ENCODE measurements at regions of chr12 and their contacts with region 1.

Region 1: DNA sequence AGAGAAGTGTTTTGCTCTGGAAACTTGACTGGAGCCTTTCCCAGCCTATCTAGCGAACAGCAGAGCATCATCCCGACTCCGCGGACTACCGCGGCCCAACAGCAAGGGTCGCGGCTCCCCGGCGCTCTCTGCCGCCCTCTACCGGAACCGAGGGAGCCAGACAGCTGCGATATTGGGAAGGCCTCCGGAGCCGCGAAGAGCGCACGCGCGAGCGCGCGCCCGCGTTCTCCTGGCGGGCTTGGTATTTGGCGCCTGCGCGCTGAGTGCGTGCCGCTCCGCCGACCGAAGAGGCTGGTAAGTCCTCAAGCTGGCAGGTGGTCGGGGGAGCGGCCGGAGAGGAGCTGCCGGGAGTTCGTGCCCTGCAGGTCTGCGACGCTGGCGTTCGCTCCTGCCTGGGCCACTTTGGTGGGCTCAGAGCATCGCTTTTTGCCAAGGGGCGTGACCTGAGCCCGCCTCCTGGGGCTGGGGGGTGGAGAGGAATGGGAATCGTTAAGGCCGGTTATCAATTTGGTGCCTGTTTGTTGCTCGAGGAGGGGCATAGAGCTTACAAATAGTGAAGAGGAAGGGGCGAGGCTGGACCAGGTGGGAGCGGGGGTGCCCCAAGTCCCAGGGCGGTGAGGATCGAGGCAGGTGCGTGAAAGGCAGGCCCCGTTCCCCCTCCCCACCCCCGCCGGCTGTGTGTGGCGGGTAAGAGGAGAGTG is at the start of gene TMEM106C:
- DNase-seq: peak; percentile 89 to 95 (median 91)
- H3K4me3 ChIP-seq: peak within 1 kb of the TSS; percentile 55 to 96 (median 86)
- H3K27ac ChIP-seq: peak within 1 kb of the TSS in 1 of 2 experiments; percentile 51
- H3K4me1 ChIP-seq: peaks cover 0 to 15% (median 9%) of the 10 kb centered on the region in 4 experiments
- H3K27me3 ChIP-seq: peaks cover 0 to 9% (median 3%) of the 10 kb centered on the region in 5 experiments

Region 2: GRCh38 chr12:47949441-47950308 is 13.8 kb before region 1 on chr12:
- CTCF ChIA-PET with region 1: interaction called, 45 read pairs
- POLR2A ChIA-PET with region 1: no interaction called
- DNase-seq: peak; percentile 46 to 60 (median 59)
- H3K4me3 ChIP-seq: no peak overlapping the region
- H3K27ac ChIP-seq: no peak overlapping the region
- H3K4me1 ChIP-seq: peaks cover 2 to 16% (median 13%) of the 10 kb centered on the region in 4 experiments
- H3K27me3 ChIP-seq: no peaks in the 10 kb centered on the region

Region 3: DNA sequence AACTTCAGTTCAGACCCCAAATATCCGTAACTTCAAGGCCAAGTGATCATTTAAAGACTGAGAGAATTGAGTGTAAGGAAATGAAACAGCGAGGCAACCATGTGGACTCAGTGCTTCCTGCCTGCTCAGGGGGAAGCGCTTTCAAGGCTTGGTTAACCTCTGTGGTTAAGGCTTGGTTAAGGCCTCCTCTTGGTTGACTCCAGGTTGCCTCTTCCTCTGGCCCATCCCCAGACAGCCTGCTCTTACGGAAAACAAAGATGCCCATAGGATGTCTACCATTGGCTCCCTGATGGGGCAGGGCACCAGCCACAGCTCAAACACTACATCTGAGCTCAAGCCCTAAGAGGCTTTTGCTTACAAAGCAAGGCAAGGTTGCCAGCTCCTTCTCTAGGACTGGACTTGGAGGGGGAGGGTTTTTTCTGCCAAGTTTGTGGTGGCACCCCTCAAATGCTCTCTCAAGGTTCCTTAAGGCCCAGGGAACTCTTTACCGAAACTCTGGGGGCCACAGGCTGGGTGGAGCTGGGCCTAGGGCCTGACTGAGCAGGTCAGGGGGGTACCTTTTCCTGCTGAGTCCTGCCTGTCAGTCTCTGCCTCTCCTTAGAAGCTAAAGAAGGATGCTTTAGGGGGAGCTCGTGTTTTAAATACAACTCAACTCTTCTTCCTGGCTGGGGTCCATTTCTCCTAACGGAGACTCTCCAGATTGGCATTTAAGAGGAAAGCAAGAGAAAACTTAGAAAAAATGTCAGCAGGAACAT is 27.0 kb after region 1 on chr12:
- CTCF ChIA-PET with region 1: interaction called, 10 read pairs
- POLR2A ChIA-PET with region 1: interaction called, 5 read pairs
- DNase-seq: peak; percentile 69 to 90 (median 88)
- H3K4me3 ChIP-seq: peak overlapping the region in 2 of 7 experiments; percentile 21 to 29
- H3K27ac ChIP-seq: no peak overlapping the region
- H3K4me1 ChIP-seq: peaks cover 0 to 18% (median 15%) of the 10 kb centered on the region in 4 experiments
- H3K27me3 ChIP-seq: peaks cover 0 to 10% (median 3%) of the 10 kb centered on the region in 5 experiments